Heart right ventricle (tissue), 16 donors: ENCODE measurements at regions of chr14 and their contacts with region 1.

Region 1: DNA sequence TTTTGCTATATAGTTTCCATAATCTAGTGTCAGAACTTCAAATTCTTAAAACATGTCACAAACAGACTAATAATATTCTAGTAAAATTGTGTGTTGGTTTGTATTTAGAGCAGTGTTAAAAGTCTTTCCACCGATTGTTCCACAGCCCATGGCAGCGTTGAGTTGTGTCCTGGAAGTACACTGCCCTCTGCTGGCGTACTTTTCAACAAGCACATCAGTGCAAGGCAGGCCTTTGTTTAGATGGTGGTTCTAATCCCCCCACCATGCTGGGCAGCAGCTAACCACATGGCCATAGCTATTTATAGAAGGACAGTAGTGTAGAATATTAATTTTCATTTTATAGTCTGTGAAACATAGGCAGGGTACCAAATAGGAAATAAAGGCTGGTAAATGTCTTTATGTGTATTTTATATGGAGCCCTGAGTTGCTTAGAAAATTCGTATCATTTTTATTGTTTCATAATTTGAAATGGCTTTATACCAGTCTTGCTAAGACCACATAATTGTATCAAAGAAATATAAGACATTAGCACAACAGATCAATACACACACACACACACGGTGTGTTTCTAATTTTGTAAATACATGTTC is 235.4 kb downstream of the SEC23A start:
- DNase-seq: peak; percentile 26 to 79
- ATAC-seq: peak in 7 of 8 donors; percentile 81 to 95 (median 88)
- H3K4me3 ChIP-seq: no peak overlapping the region
- H3K27ac ChIP-seq: no peak overlapping the region
- H3K4me1 ChIP-seq: peaks cover 0 to 28% (median 14%) of the 10 kb centered on the region in 9 donors
- H3K27me3 ChIP-seq: no peaks in the 10 kb centered on the region
- CTCF ChIP-seq: peak; percentile 49 to 89 (median 81)

Region 2: DNA sequence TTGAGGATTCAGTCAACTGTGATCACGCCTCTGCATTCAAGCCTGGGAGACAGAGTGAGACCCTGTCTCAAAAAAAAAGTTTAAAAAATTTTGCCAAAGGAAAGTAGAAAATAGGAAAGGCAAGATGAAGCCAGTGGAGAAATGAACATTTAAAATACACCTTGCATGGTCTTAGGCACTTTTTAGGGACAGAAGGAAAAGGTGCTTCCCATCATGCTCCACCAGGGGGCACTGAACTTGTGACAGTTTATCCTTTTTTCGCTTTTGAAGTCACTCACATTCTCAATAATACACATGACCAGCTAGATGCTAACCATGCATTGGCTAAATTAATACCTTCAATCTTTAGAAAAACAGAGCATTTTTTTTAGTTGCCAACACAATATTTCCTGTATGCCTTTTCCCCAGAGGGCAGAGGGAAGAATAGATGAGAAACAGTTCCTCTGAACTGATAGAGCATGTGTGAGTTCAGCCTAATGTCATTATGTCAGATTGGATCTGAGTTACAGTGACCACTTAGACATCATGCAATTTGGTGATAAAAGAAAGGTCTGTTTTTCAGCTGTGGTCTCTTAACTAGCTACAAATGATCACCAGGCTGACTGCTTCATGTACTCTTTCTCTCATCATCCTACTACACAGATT is 881.7 kb before region 1 on chr14:
- intact Hi-C with region 1: loop called in 2 of 10 experiments (anchors 5 to 10 kb)
- DNase-seq: peak in 1 of 2 donors; percentile 27
- ATAC-seq: no peak
- H3K4me3 ChIP-seq: no peak overlapping the region
- H3K27ac ChIP-seq: no peak overlapping the region
- H3K4me1 ChIP-seq: no peaks in the 10 kb centered on the region
- H3K27me3 ChIP-seq: no peaks in the 10 kb centered on the region
- CTCF ChIP-seq: peak in 8 of 9 donors; percentile 50 to 76 (median 68)

Region 3: DNA sequence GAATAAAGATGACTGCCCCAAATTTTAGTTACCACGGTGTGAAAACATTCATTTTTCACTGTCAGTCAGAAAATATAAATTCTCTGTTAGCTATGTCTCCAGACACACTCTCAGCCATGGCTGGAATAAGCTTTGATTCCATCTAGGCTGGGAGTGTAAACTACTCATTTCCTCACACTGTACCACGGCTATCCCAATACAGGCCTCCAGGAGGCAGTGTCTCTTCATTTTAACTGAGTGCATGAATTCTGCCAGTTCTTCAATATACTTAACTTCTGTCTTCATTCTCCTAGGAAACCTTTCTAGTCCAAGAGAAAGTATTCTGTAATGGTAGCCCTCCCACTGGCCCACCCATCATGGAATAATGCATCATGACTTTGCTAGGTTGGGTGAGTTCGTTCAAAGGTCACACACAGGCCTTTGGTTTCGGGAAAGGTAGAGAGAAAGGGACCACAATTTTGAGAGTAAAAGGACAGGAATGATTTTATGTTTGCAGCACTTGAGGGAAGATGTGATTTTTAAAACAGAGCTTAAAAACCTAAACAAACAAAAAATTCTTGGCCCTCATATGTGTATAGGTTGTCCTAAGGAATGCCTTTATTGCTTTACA is 145.7 kb before region 1 on chr14:
- intact Hi-C with region 1: loop called in 9 of 10 experiments (anchors 2 to 10 kb)
- DNase-seq: peak; percentile 14 to 54
- ATAC-seq: peak in 7 of 8 donors; percentile 61 to 81 (median 75)
- H3K4me3 ChIP-seq: no peak overlapping the region
- H3K27ac ChIP-seq: no peak overlapping the region
- H3K4me1 ChIP-seq: peaks cover 0 to 11% (median 0%) of the 10 kb centered on the region in 9 donors
- H3K27me3 ChIP-seq: no peaks in the 10 kb centered on the region
- CTCF ChIP-seq: peak; percentile 53 to 85 (median 76)

Region 4: GRCh38 chr14:38999949-39000348 is 132.3 kb after region 1 on chr14:
- intact Hi-C with region 1: loop called in 4 of 10 experiments (anchors 5 to 10 kb)
- DNase-seq: no peak
- ATAC-seq: peak in 1 of 8 donors; percentile 25
- H3K4me3 ChIP-seq: no peak overlapping the region
- H3K27ac ChIP-seq: peak overlapping the region in 2 of 10 donors; percentile 16 to 17
- H3K4me1 ChIP-seq: peaks cover 0 to 26% (median 10%) of the 10 kb centered on the region in 9 donors
- H3K27me3 ChIP-seq: no peaks in the 10 kb centered on the region
- CTCF ChIP-seq: no peak

Region 5: DNA sequence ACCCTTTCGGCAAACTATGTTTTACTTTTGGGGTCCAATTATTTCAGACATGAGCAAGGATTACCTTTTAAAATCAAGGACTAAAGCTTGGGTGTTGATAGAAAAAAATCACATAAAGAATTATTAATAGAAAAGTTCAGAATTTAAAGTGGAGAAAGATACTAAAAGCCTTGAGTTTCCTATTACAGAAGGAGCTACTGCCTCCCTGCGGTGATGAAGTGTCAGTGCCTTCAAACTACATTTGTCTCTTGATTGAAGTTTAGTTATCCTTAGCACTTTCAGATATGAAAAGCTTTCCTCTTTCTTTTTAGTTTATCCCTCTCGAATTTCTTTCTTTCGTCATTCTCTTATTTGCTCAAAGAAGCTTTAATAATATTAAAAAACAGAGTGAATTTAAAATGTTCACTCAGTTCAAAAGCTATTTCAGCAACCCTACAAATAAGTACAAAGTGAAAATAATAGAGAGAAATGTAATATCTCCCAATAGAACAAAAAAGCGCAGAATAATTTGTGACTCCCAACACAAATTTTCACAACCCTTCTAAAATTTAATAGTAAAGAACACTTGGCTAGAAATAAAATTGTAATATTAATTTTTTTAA is 147.8 kb after region 1 on chr14:
- intact Hi-C with region 1: loop called in 5 of 10 experiments (anchors 2 to 10 kb)
- DNase-seq: peak in 1 of 2 donors; percentile 25
- ATAC-seq: peak in 1 of 8 donors; percentile 38
- H3K4me3 ChIP-seq: no peak overlapping the region
- H3K27ac ChIP-seq: no peak overlapping the region
- H3K4me1 ChIP-seq: peaks cover 0 to 5% (median 0%) of the 10 kb centered on the region in 9 donors
- H3K27me3 ChIP-seq: no peaks in the 10 kb centered on the region
- CTCF ChIP-seq: peak; percentile 61 to 93 (median 88)